ENCODE measurements at regions of chr11 and their contacts with region 1.

Region 1: GRCh38 chr11:12263141-12263693 is 114.2 kb upstream of the PARVA start:
- DNase-seq: peak in 1 of 5 donors; percentile 53
- ATAC-seq: peak; percentile 79 to 91 (median 84)
- H3K4me3 ChIP-seq: no peak overlapping the region
- H3K27ac ChIP-seq: peak overlapping the region; percentile 17 to 85 (median 69)
- H3K4me1 ChIP-seq: peaks cover 0 to 36% (median 14%) of the 10 kb centered on the region in 12 donors
- H3K27me3 ChIP-seq: no peaks in the 10 kb centered on the region
- CTCF ChIP-seq: no peak
- POLR2A ChIP-seq: no peak

Region 2: GRCh38 chr11:12061851-12062560 is 201.2 kb before region 1 on chr11:
- intact Hi-C with region 1: loop called in 1 of 10 experiments (anchors 5 kb)
- DNase-seq: no peak
- ATAC-seq: peak in 1 of 4 donors; percentile 38
- H3K4me3 ChIP-seq: no peak overlapping the region
- H3K27ac ChIP-seq: no peak overlapping the region
- H3K4me1 ChIP-seq: peaks cover 0 to 14% (median 7%) of the 10 kb centered on the region in 12 donors
- H3K27me3 ChIP-seq: no peaks in the 10 kb centered on the region
- CTCF ChIP-seq: no peak
- POLR2A ChIP-seq: no peak

Measured in heart left ventricle (tissue), 16 donors.